ENCODE measurements at regions of chr4 and their contacts with region 1.

Region 1: DNA sequence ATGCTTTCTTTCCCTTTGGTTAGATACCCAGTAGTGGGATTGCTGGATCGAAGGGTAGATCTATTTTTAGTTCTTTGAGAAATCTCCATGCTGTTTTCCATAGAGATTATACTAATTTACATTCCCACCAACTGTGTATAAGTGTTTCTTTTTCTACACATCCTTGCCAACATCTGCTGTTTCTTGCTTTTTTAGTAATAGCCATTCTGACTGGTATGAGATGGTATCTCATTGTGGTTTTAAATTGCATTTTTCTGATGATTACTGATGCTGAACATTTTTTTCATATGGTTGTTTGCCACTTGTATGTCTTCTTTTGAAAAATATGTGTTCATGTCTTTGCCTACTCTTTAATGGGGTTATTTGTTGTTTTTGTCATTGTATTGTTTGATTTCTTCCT is 6.6 kb upstream of the AGA start:
- DNase-seq: no peak
- ATAC-seq: no peak
- H3K4me3 ChIP-seq: no peak overlapping the region
- H3K4me3 Mint-ChIP-seq: no peak overlapping the region
- H3K27ac ChIP-seq: no peak overlapping the region
- H3K27ac Mint-ChIP-seq: no peak overlapping the region
- H3K4me1 ChIP-seq: no peaks in the 10 kb centered on the region
- H3K4me1 Mint-ChIP-seq: peaks cover 6 to 29% (median 18%) of the 10 kb centered on the region in 7 donors
- H3K27me3 ChIP-seq: no peaks in the 10 kb centered on the region
- H3K27me3 Mint-ChIP-seq: no peaks in the 10 kb centered on the region

Region 2: DNA sequence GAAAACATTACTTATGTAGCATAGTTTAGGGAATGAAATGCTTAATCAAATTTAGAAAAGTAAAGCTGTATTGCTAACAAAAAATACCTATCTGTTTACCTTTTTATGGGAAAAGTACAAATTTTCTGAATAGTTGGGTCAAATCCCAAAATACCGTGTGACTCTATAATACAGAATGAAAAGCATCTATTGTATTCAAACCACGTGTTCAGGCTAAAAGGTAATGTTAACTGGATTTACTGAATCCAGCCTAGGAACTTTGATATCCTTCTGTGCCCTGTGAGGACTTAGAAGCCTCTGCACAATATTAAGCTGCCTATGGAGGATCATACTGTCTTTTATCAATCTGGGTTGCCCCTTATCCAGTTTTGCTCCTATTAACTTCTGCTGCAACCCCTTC is 29.6 kb after region 1 on chr4:
- CTCF ChIA-PET with region 1: no interaction called
- POLR2A ChIA-PET with region 1: no interaction called
- intact Hi-C with region 1: no loop called
- DNase-seq: no peak
- ATAC-seq: no peak
- H3K4me3 ChIP-seq: no peak overlapping the region
- H3K4me3 Mint-ChIP-seq: no peak overlapping the region
- H3K27ac ChIP-seq: no peak overlapping the region
- H3K27ac Mint-ChIP-seq: no peak overlapping the region
- H3K4me1 ChIP-seq: peaks cover 0 to 4% of the 10 kb centered on the region in 2 donors
- H3K4me1 Mint-ChIP-seq: peaks cover 0 to 11% (median 9%) of the 10 kb centered on the region in 7 donors
- H3K27me3 ChIP-seq: no peaks in the 10 kb centered on the region
- H3K27me3 Mint-ChIP-seq: peaks cover 0 to 2% (median 0%) of the 10 kb centered on the region in 5 donors

Region 3: GRCh38 chr4:177494791-177495190 is 45.9 kb after region 1 on chr4:
- CTCF ChIA-PET with region 1: no interaction called
- POLR2A ChIA-PET with region 1: no interaction called
- intact Hi-C with region 1: loop called in 1 of 2 experiments (anchors 1 kb)
- DNase-seq: no peak
- ATAC-seq: no peak
- H3K4me3 ChIP-seq: no peak overlapping the region
- H3K4me3 Mint-ChIP-seq: no peak overlapping the region
- H3K27ac ChIP-seq: no peak overlapping the region
- H3K27ac Mint-ChIP-seq: peak overlapping the region in 1 of 9 donors; percentile 46
- H3K4me1 ChIP-seq: no peaks in the 10 kb centered on the region
- H3K4me1 Mint-ChIP-seq: peaks cover 0 to 8% (median 0%) of the 10 kb centered on the region in 7 donors
- H3K27me3 ChIP-seq: no peaks in the 10 kb centered on the region
- H3K27me3 Mint-ChIP-seq: peaks cover 0 to 4% (median 0%) of the 10 kb centered on the region in 5 donors

Measured in naive thymus-derived CD4-positive, alpha-beta T cell (primary cell).